ENCODE measurements at regions of chr7 and their contacts with region 1.

Region 1: GRCh38 chr7:142323706-142324105 is 65.8 kb upstream of the PRSS58 start:
- DNase-seq: peak; percentile 65
- H3K4me3 Mint-ChIP-seq: no peak overlapping the region
- H3K27ac Mint-ChIP-seq: peak overlapping the region; percentile 2
- H3K4me1 Mint-ChIP-seq: peaks cover 25% of the 10 kb centered on the region
- H3K27me3 Mint-ChIP-seq: peaks cover 32% of the 10 kb centered on the region

Region 2: GRCh38 chr7:142301923-142302550 is 21.7 kb before region 1 on chr7:
- CTCF ChIA-PET with region 1: interaction called, 59 read pairs
- DNase-seq: no peak
- H3K4me3 Mint-ChIP-seq: no peak overlapping the region
- H3K27ac Mint-ChIP-seq: no peak overlapping the region
- H3K4me1 Mint-ChIP-seq: peaks cover 25% of the 10 kb centered on the region
- H3K27me3 Mint-ChIP-seq: peaks cover 37% of the 10 kb centered on the region

Region 3: DNA sequence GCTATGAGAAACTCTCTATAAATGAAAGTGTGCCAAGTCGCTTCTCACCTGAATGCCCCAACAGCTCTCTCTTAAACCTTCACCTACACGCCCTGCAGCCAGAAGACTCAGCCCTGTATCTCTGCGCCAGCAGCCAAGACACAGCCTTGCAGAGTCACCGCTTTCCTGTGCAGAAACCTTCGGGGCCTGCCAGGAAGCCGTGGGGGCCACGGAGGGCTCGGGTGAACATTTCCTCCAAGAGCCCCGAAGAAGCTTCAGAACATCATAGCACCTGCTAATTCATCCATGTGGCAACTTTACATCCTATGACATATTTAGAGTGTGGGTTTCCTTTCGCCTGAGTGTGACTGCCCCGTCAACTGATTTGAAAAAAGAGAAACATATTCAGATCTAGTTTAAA is 10.2 kb before region 1 on chr7:
- CTCF ChIA-PET with region 1: interaction called, 16 read pairs
- DNase-seq: peak; percentile 38
- H3K4me3 Mint-ChIP-seq: peak overlapping the region; percentile 25
- H3K27ac Mint-ChIP-seq: peak overlapping the region; percentile 13
- H3K4me1 Mint-ChIP-seq: peaks cover 17% of the 10 kb centered on the region
- H3K27me3 Mint-ChIP-seq: peaks cover 40% of the 10 kb centered on the region

Region 4: DNA sequence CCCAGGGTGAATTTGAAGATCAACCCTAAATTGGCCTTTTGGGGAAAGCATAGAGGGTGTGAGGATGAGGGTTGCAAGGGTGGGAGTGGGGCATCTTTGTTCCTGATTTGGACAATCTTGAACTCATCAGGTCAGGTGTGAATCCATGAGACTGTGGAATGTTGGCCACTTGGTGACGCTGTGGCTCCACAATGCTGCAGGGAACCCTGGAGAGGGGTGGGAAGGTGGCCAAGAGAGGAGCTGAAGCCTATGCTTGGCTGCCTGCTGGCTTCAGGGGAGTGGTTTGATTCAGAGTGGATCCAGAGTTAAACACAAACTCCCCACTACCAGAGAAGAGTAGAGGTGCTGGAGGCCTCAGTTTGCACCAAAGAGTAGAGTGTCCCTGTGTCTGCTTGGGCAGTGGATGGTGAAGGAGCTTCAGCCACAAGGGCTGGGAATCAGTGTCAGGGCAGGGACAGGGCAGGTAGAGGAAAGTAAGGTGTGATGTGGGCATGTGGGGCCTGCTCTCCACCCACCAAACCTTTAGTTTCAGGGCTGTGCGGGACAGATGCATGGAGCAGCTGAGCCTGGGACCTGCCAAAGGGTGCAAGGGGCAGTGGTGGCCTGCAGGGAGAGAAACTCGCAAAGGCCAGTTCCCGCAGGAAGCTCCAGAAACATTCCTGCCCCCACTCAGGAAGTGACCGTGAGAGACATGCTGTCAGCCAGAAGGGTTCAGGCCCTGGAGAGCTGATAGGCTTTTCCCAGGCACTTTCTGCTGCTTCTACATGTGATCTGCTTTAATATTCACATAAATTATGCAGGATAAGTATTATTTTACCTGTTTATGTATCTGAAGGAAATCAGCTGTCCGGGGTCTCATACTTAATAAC is 15.2 kb after region 1 on chr7:
- CTCF ChIA-PET with region 1: interaction called, 28 read pairs
- DNase-seq: no peak
- H3K4me3 Mint-ChIP-seq: no peak overlapping the region
- H3K27ac Mint-ChIP-seq: peak overlapping the region; percentile 20
- H3K4me1 Mint-ChIP-seq: peaks cover 8% of the 10 kb centered on the region
- H3K27me3 Mint-ChIP-seq: peaks cover 22% of the 10 kb centered on the region

Region 5: GRCh38 chr7:142345811-142346210 is 22.1 kb after region 1 on chr7:
- CTCF ChIA-PET with region 1: interaction called, 18 read pairs
- DNase-seq: peak; percentile 60
- H3K4me3 Mint-ChIP-seq: peak overlapping the region; percentile 20
- H3K27ac Mint-ChIP-seq: peak overlapping the region; percentile 84
- H3K4me1 Mint-ChIP-seq: peaks cover 24% of the 10 kb centered on the region
- H3K27me3 Mint-ChIP-seq: peaks cover 19% of the 10 kb centered on the region

Measured in activated naive CD4-positive, alpha-beta T cell treated with anti-CD3 and anti-CD28 coated beads, Interleukin-2, amount 10 ng/mL, durations not matched to agents 7 days and 5 days (primary cell).